Sciatic nerve (tissue), 2 donors: ENCODE measurements at regions of chr2 and their contacts with region 1.

Region 1: GRCh38 chr2:19362755-19363473 is 4.5 kb upstream of the OSR1 start:
- DNase-seq: peak; percentile 91
- ATAC-seq: peak; percentile 78

Region 2: DNA sequence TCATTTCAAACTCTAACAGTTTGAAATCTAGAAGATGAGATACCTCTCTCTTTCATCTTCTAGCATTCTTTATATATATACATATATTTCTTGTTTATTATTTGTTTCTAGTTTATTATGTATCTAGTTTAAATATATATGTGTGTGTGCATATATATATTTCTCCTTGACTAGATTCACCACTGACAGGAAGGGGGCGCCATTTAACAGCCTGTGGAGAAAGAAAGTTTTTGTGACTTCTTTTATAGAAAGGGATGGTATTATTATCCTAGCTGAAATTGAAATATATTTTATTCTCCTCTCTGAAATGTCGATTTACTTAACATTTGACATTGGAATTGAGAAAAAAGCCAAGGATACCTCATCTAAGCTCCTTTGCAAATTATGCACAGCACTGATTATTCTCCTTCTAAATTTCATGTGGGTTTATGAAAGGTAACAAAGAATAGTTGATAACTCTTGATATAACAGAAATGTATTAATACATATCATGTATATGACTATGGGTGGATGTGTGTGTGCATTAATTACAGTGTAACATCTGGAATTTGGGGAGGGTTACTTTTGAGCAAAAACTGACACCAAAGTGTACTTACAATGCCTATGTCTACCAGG is 612.9 kb before region 1 on chr2:
- intact Hi-C with region 1: loop called (anchors 10 kb)
- DNase-seq: peak; percentile 70
- ATAC-seq: no peak

Region 3: GRCh38 chr2:19532547-19533196 is 169.8 kb after region 1 on chr2:
- intact Hi-C with region 1: no loop called
- DNase-seq: no peak
- ATAC-seq: no peak